ENCODE measurements at regions of chr1 and their contacts with region 1.

Region 1: DNA sequence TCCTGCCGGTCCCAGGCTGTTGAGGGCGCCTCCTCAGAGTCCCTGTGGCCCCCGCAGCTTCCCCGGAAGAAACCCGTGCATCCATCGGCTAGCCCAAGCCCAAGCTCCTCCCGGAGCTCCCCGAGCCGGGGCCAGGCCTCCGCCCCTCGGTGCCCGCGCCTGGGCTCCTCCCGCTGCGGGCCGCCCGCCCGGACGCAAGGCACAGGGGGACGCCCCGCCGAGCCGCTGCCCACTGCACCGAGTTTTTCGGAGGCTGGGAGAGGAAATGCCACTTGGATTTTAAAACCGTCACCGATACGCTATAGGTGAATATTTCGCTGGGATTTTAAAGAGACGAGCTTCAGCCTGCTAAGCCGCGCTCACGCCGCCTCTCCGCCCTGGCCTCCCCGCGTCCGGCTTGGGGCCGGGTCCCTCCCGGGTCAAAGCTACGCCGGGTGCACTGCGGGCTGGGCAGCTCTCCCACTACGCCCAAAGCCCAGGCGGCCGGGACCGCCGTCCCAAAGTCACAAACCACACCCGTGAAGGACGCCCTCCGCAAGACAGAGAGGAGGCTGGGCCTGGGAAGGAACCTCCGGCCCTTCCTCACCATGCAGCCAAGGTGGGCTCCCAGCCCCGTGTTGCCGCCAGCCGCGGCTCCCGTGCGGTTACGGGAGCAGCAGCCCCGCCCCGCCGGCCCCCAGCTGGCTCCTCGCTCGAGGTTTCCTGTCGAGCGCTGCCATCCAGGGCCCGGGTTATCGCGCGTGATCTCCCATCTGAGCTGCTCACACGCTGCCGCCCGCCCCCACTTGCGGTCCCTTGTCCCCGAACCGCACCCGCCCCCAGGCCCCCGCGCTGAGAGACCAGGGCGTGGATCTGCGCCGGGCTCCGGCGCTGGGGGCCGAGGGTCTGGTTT is 63.2 kb downstream of the CD247 start:
- DNase-seq: peak; percentile 81 to 92 (median 84)
- H3K4me3 ChIP-seq: peak overlapping the region; percentile 29 to 85
- H3K4me3 Mint-ChIP-seq: peak overlapping the region; percentile 70 to 88 (median 86)
- H3K27ac ChIP-seq: peak overlapping the region; percentile 88
- H3K27ac Mint-ChIP-seq: peak overlapping the region; percentile 51 to 98 (median 91)
- H3K4me1 ChIP-seq: peaks cover 83% of the 10 kb centered on the region
- H3K4me1 Mint-ChIP-seq: peaks cover 58 to 82% (median 63%) of the 10 kb centered on the region in 4 donors
- H3K27me3 ChIP-seq: no peaks in the 10 kb centered on the region
- H3K27me3 Mint-ChIP-seq: no peaks in the 10 kb centered on the region

Region 2: DNA sequence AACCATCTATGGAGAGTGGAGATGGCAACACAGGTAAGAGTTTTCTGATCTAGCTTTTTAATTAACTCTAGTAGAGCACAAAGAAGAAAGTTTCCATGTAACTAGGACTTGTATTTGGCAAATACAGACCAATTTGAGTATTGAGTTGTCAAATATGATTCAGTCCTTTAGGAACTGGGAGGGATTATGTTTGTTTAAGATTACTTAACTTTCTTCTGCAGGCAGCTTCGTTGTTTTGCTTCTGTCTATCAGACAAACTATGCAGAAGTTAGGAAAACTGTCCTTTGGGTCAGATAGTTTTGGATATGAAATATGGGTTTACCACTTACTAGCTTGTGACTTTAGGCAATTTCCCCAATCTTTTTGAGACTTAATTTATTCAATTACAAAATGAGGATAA is 122.6 kb before region 1 on chr1:
- CTCF ChIA-PET with region 1: no interaction called
- POLR2A ChIA-PET with region 1: no interaction called
- intact Hi-C with region 1: no loop called
- DNase-seq: no peak
- H3K4me3 ChIP-seq: no peak overlapping the region
- H3K4me3 Mint-ChIP-seq: no peak overlapping the region
- H3K27ac ChIP-seq: no peak overlapping the region
- H3K27ac Mint-ChIP-seq: no peak overlapping the region
- H3K4me1 ChIP-seq: peaks cover 11% of the 10 kb centered on the region
- H3K4me1 Mint-ChIP-seq: peaks cover 12 to 25% (median 14%) of the 10 kb centered on the region in 4 donors
- H3K27me3 ChIP-seq: no peaks in the 10 kb centered on the region
- H3K27me3 Mint-ChIP-seq: no peaks in the 10 kb centered on the region

Region 3: GRCh38 chr1:167360120-167360519 is 95.0 kb before region 1 on chr1:
- CTCF ChIA-PET with region 1: no interaction called
- POLR2A ChIA-PET with region 1: no interaction called
- intact Hi-C with region 1: no loop called
- DNase-seq: no peak
- H3K4me3 ChIP-seq: no peak overlapping the region
- H3K4me3 Mint-ChIP-seq: no peak overlapping the region
- H3K27ac ChIP-seq: no peak overlapping the region
- H3K27ac Mint-ChIP-seq: no peak overlapping the region
- H3K4me1 ChIP-seq: no peaks in the 10 kb centered on the region
- H3K4me1 Mint-ChIP-seq: peaks cover 0 to 5% (median 2%) of the 10 kb centered on the region in 4 donors
- H3K27me3 ChIP-seq: no peaks in the 10 kb centered on the region
- H3K27me3 Mint-ChIP-seq: no peaks in the 10 kb centered on the region

Region 4: GRCh38 chr1:167467126-167467710 is 12.1 kb after region 1 on chr1:
- CTCF ChIA-PET with region 1: no interaction called
- POLR2A ChIA-PET with region 1: interaction called, 46 read pairs
- intact Hi-C with region 1: no loop called
- DNase-seq: no peak
- H3K4me3 ChIP-seq: no peak overlapping the region
- H3K4me3 Mint-ChIP-seq: no peak overlapping the region
- H3K27ac ChIP-seq: no peak overlapping the region
- H3K27ac Mint-ChIP-seq: peak overlapping the region; percentile 37 to 100 (median 72)
- H3K4me1 ChIP-seq: peaks cover 95% of the 10 kb centered on the region
- H3K4me1 Mint-ChIP-seq: peaks cover 52 to 94% (median 69%) of the 10 kb centered on the region in 4 donors
- H3K27me3 ChIP-seq: no peaks in the 10 kb centered on the region
- H3K27me3 Mint-ChIP-seq: no peaks in the 10 kb centered on the region

Region 5: DNA sequence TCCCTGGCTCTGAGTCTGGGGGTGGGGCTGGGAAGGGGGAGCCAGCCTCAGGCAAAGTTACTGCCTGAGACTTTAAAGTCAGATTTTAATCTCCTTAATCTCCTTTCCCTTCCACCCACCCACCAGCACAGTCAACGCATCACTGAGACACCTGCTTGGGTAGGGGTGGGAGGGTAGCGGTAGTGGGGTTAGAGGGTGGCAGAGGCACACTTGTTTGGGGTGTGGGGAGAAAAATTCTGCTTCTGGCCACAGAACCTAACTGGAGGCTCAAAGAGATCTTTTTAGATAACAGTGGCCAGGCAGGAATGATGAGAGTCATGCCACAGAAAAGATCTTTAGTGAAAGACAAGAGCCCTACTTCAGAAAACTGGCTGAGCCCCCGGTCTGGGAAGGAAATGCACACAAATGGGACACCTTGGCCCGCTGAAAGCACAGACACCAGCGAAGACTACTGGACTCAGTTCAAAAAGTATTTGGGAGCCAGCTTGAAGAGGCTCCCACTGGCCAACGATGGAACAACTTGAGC is 19.1 kb after region 1 on chr1:
- CTCF ChIA-PET with region 1: interaction called, 5 read pairs
- POLR2A ChIA-PET with region 1: interaction called, 46 read pairs
- intact Hi-C with region 1: loop called (anchors 2 kb)
- DNase-seq: peak; percentile 42 to 84 (median 51)
- H3K4me3 ChIP-seq: peak overlapping the region in 1 of 2 donors; percentile 32
- H3K4me3 Mint-ChIP-seq: peak overlapping the region; percentile 49 to 89 (median 80)
- H3K27ac ChIP-seq: peak overlapping the region; percentile 48
- H3K27ac Mint-ChIP-seq: peak overlapping the region; percentile 80 to 100 (median 92)
- H3K4me1 ChIP-seq: peaks cover 97% of the 10 kb centered on the region
- H3K4me1 Mint-ChIP-seq: peaks cover 62 to 99% (median 76%) of the 10 kb centered on the region in 4 donors
- H3K27me3 ChIP-seq: no peaks in the 10 kb centered on the region
- H3K27me3 Mint-ChIP-seq: no peaks in the 10 kb centered on the region

Region 6: GRCh38 chr1:167486090-167486824 is 31.1 kb after region 1 on chr1:
- CTCF ChIA-PET with region 1: interaction called, 3 read pairs
- POLR2A ChIA-PET with region 1: interaction called, 58 read pairs
- intact Hi-C with region 1: loop called (anchors 2 kb)
- DNase-seq: peak in 1 of 5 donors; percentile 46
- H3K4me3 ChIP-seq: no peak overlapping the region
- H3K4me3 Mint-ChIP-seq: peak overlapping the region; percentile 38 to 89 (median 75)
- H3K27ac ChIP-seq: peak overlapping the region; percentile 55
- H3K27ac Mint-ChIP-seq: peak overlapping the region; percentile 52 to 100 (median 94)
- H3K4me1 ChIP-seq: peaks cover 99% of the 10 kb centered on the region
- H3K4me1 Mint-ChIP-seq: peaks cover 76 to 100% (median 90%) of the 10 kb centered on the region in 4 donors
- H3K27me3 ChIP-seq: no peaks in the 10 kb centered on the region
- H3K27me3 Mint-ChIP-seq: no peaks in the 10 kb centered on the region

Region 7: DNA sequence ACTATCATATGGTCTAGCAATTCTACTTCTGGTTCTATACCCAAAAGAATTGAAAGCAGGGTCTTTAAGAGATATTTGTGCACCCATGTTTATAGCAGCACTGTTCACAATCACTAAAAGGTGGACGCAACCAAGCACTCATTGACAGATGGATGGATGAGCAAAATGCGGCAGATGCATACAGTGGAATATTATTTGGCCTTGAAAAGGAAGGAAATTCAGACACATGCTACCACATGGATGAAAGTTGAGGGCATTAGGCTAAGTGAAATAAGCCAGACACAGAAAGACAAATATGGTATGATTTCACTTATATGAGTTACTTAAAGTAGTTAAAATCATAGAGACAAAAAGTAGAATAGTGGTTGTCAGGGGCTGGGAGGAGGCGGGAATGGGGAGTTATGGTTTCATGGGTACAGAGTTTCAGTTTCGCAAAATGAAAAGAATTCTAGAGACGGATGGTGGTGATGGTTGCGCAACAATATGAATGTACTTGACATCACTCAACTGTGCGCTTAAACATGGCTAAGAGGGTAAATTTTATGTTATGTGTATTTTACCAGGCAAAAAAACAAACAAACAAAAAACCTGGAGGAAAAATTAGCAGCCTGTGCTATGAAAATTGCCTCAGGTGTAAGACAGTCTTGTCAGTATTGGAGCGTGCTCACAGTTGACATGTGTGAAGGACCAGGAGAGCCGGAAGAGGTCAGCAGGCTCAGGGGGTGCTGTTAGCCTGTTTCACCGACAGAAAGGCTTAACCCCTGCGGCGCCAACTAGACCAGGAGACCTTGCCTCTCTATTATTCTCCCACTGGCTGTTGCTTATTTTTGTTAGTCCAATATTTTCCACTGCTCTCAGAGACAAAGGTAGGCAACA is 36.7 kb after region 1 on chr1:
- CTCF ChIA-PET with region 1: no interaction called
- POLR2A ChIA-PET with region 1: interaction called, 58 read pairs
- intact Hi-C with region 1: loop called (anchors 2 kb)
- DNase-seq: peak; percentile 36 to 64 (median 43)
- H3K4me3 ChIP-seq: peak overlapping the region; percentile 4 to 13
- H3K4me3 Mint-ChIP-seq: peak overlapping the region; percentile 67 to 85 (median 79)
- H3K27ac ChIP-seq: peak overlapping the region; percentile 64
- H3K27ac Mint-ChIP-seq: peak overlapping the region; percentile 87 to 100 (median 94)
- H3K4me1 ChIP-seq: peaks cover 99% of the 10 kb centered on the region
- H3K4me1 Mint-ChIP-seq: peaks cover 76 to 100% (median 88%) of the 10 kb centered on the region in 4 donors
- H3K27me3 ChIP-seq: no peaks in the 10 kb centered on the region
- H3K27me3 Mint-ChIP-seq: no peaks in the 10 kb centered on the region

Region 8: GRCh38 chr1:167499664-167500101 is 44.5 kb after region 1 on chr1:
- CTCF ChIA-PET with region 1: no interaction called
- POLR2A ChIA-PET with region 1: interaction called, 16 read pairs
- intact Hi-C with region 1: no loop called
- DNase-seq: peak in 1 of 5 donors; percentile 62
- H3K4me3 ChIP-seq: no peak overlapping the region
- H3K4me3 Mint-ChIP-seq: peak overlapping the region in 7 of 8 donors; percentile 26 to 88 (median 73)
- H3K27ac ChIP-seq: peak overlapping the region; percentile 32
- H3K27ac Mint-ChIP-seq: peak overlapping the region; percentile 75 to 100 (median 88)
- H3K4me1 ChIP-seq: peaks cover 100% of the 10 kb centered on the region
- H3K4me1 Mint-ChIP-seq: peaks cover 83 to 100% (median 95%) of the 10 kb centered on the region in 4 donors
- H3K27me3 ChIP-seq: no peaks in the 10 kb centered on the region
- H3K27me3 Mint-ChIP-seq: no peaks in the 10 kb centered on the region

Region 9: DNA sequence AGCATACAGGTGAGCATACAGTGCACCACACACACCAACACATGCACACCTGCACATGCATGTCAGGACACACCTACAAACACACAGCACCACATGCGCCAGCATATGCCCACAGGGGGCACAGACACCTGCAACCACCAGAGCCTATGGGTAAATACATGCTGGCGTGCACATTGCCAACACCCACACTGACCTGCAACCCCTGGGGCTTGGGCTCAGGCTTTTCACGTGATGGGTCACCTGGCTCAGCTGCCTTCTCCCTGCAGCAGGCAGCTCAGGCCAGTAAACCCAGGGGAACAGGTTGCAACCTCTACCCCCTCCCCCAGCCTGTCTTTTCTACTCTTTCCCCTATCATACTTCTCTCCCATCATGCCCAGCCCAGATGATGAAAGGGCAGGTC is 55.1 kb after region 1 on chr1:
- CTCF ChIA-PET with region 1: interaction called, 3 read pairs
- POLR2A ChIA-PET with region 1: interaction called, 230 read pairs
- intact Hi-C with region 1: no loop called
- DNase-seq: no peak
- H3K4me3 ChIP-seq: peak overlapping the region; percentile 5 to 15
- H3K4me3 Mint-ChIP-seq: peak overlapping the region; percentile 60 to 90 (median 82)
- H3K27ac ChIP-seq: peak overlapping the region; percentile 16
- H3K27ac Mint-ChIP-seq: peak overlapping the region; percentile 4 to 100 (median 89)
- H3K4me1 ChIP-seq: peaks cover 97% of the 10 kb centered on the region
- H3K4me1 Mint-ChIP-seq: peaks cover 57 to 92% (median 75%) of the 10 kb centered on the region in 4 donors
- H3K27me3 ChIP-seq: no peaks in the 10 kb centered on the region
- H3K27me3 Mint-ChIP-seq: no peaks in the 10 kb centered on the region

Region 10: GRCh38 chr1:167623951-167624350 is 168.8 kb after region 1 on chr1:
- CTCF ChIA-PET with region 1: no interaction called
- POLR2A ChIA-PET with region 1: no interaction called
- intact Hi-C with region 1: no loop called
- DNase-seq: no peak
- H3K4me3 ChIP-seq: no peak overlapping the region
- H3K4me3 Mint-ChIP-seq: no peak overlapping the region
- H3K27ac ChIP-seq: no peak overlapping the region
- H3K27ac Mint-ChIP-seq: peak overlapping the region in 6 of 7 donors; percentile 14 to 77 (median 52)
- H3K4me1 ChIP-seq: peaks cover 55% of the 10 kb centered on the region
- H3K4me1 Mint-ChIP-seq: peaks cover 46 to 79% (median 67%) of the 10 kb centered on the region in 4 donors
- H3K27me3 ChIP-seq: no peaks in the 10 kb centered on the region
- H3K27me3 Mint-ChIP-seq: no peaks in the 10 kb centered on the region

Region 11: DNA sequence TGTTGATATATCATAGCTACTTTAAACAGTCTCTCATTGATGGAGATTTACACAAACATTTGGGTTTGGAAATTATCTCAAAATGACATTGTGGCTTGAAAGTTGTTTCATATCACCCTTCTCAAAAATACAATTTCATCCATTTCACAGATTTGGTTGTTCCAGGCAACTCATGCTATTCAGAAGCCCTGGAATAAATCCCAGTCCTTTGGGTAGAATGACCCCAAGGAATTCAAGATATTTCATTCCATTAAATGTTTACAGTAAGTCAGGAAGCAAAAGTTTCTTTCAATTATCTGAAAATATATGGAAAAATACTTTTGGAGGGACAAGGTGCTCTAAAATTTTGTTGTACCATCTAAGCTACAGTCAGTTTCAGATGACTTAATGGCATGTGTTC is 293.8 kb after region 1 on chr1:
- CTCF ChIA-PET with region 1: no interaction called
- POLR2A ChIA-PET with region 1: no interaction called
- intact Hi-C with region 1: no loop called
- DNase-seq: no peak
- H3K4me3 ChIP-seq: no peak overlapping the region
- H3K4me3 Mint-ChIP-seq: no peak overlapping the region
- H3K27ac ChIP-seq: no peak overlapping the region
- H3K27ac Mint-ChIP-seq: no peak overlapping the region
- H3K4me1 ChIP-seq: no peaks in the 10 kb centered on the region
- H3K4me1 Mint-ChIP-seq: peaks cover 0 to 6% (median 4%) of the 10 kb centered on the region in 4 donors
- H3K27me3 ChIP-seq: no peaks in the 10 kb centered on the region
- H3K27me3 Mint-ChIP-seq: no peaks in the 10 kb centered on the region

Measured in CD4-positive, alpha-beta memory T cell (primary cell).